Breast epithelium (tissue), 4 donors: ENCODE measurements at regions of chr5 and their contacts with region 1.

Region 1: GRCh38 chr5:60267907-60268306 is 374.4 kb upstream of the PDE4D start:
- DNase-seq: no peak
- H3K4me3 ChIP-seq: no peak overlapping the region
- H3K27ac ChIP-seq: no peak overlapping the region
- H3K4me1 ChIP-seq: no peaks in the 10 kb centered on the region
- H3K27me3 ChIP-seq: no peaks in the 10 kb centered on the region
- CTCF ChIP-seq: no peak
- POLR2A ChIP-seq: no peak

Region 2: GRCh38 chr5:60744682-60745081 is 476.8 kb after region 1 on chr5:
- intact Hi-C with region 1: loop called (anchors 5 kb)
- DNase-seq: no peak
- H3K4me3 ChIP-seq: no peak overlapping the region
- H3K27ac ChIP-seq: no peak overlapping the region
- H3K4me1 ChIP-seq: no peaks in the 10 kb centered on the region
- H3K27me3 ChIP-seq: no peaks in the 10 kb centered on the region
- CTCF ChIP-seq: no peak
- POLR2A ChIP-seq: no peak